ENCODE measurements at regions of chr17 and their contacts with region 1.

Region 1: GRCh38 chr17:81207610-81208581 is 14.9 kb downstream of the CEP131 start:
- DNase-seq: no peak
- H3K4me3 ChIP-seq: no peak overlapping the region
- H3K27ac ChIP-seq: no peak overlapping the region
- H3K4me1 ChIP-seq: no peaks in the 10 kb centered on the region
- H3K27me3 ChIP-seq: no peaks in the 10 kb centered on the region
- CTCF ChIP-seq: no peak

Region 2: GRCh38 chr17:81049973-81050551 is 157.8 kb before region 1 on chr17:
- CTCF ChIA-PET with region 1: no interaction called
- dilution Hi-C with region 1: no loop called
- in situ Hi-C with region 1: no loop called
- intact Hi-C with region 1: no loop called
- DNase-seq: peak; percentile 97
- H3K4me3 ChIP-seq: peak overlapping the region in 2 of 3 experiments; percentile 18 to 33
- H3K27ac ChIP-seq: peak overlapping the region; percentile 91
- H3K4me1 ChIP-seq: peaks cover 56% of the 10 kb centered on the region
- H3K27me3 ChIP-seq: no peaks in the 10 kb centered on the region
- CTCF ChIP-seq: no peak

Region 3: GRCh38 chr17:81114351-81115093 is 93.4 kb before region 1 on chr17:
- CTCF ChIA-PET with region 1: no interaction called
- dilution Hi-C with region 1: loop called (anchors 5 kb)
- in situ Hi-C with region 1: no loop called
- intact Hi-C with region 1: no loop called
- DNase-seq: no peak
- H3K4me3 ChIP-seq: no peak overlapping the region
- H3K27ac ChIP-seq: no peak overlapping the region
- H3K4me1 ChIP-seq: peaks cover 16% of the 10 kb centered on the region
- H3K27me3 ChIP-seq: no peaks in the 10 kb centered on the region
- CTCF ChIP-seq: no peak

Region 4: GRCh38 chr17:81131486-81132196 is 76.3 kb before region 1 on chr17:
- CTCF ChIA-PET with region 1: no interaction called
- dilution Hi-C with region 1: no loop called
- in situ Hi-C with region 1: no loop called
- intact Hi-C with region 1: no loop called
- DNase-seq: no peak
- H3K4me3 ChIP-seq: no peak overlapping the region
- H3K27ac ChIP-seq: no peak overlapping the region
- H3K4me1 ChIP-seq: no peaks in the 10 kb centered on the region
- H3K27me3 ChIP-seq: peaks cover 3% of the 10 kb centered on the region
- CTCF ChIP-seq: no peak

Region 5: DNA sequence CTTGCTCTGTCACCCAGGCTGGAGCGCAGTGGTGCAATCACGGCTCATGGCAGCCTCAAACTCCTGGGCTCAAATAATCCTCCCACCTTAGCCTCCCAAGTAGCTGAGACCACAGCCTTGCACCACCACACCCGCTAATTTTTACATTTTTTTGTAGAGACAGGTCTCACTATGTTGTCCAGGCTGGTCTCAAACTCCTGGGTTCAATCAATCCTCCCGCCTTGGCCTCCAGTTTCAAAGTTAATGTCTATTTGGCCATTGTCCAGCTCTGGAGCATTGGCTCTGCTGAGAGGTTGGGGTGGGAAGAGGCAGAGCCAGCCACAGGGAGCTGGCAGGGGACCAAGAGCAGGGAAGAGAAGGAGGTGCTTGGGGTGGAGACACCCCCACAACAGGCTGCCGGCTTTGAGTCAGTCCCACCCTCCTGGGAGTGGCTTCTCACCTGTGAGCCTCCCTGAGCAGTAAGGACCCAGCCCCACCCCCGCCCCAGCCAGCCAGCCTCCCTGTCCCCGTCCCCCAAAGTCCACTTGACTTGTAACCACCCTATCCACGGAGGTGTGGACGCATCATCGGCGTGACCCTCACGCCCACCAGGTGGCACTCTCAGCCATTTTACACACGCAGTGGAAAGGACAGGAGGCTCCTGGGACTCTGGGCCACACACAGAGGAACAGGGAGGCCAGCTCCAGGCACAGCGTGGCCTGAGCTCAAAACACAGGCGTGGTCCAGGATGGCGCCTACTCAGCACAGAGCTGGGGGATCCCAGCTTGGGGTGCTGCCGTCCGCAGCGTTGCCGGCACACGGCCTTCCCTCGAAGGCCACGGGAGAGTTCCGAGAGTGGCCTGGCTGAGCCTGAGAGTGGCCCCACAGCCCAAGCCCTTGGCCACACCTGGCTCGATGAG is 65.3 kb before region 1 on chr17:
- CTCF ChIA-PET with region 1: no interaction called
- dilution Hi-C with region 1: loop called (anchors 5 kb)
- in situ Hi-C with region 1: no loop called
- intact Hi-C with region 1: no loop called
- DNase-seq: peak; percentile 60
- H3K4me3 ChIP-seq: no peak overlapping the region
- H3K27ac ChIP-seq: no peak overlapping the region
- H3K4me1 ChIP-seq: peaks cover 5% of the 10 kb centered on the region
- H3K27me3 ChIP-seq: no peaks in the 10 kb centered on the region
- CTCF ChIP-seq: peak; percentile 59 to 74

Region 6: GRCh38 chr17:81171941-81172340 is 36.0 kb before region 1 on chr17:
- CTCF ChIA-PET with region 1: no interaction called
- dilution Hi-C with region 1: loop called (anchors 5 kb)
- in situ Hi-C with region 1: no loop called
- intact Hi-C with region 1: no loop called
- DNase-seq: no peak
- H3K4me3 ChIP-seq: no peak overlapping the region
- H3K27ac ChIP-seq: no peak overlapping the region
- H3K4me1 ChIP-seq: no peaks in the 10 kb centered on the region
- H3K27me3 ChIP-seq: no peaks in the 10 kb centered on the region
- CTCF ChIP-seq: no peak

Region 7: GRCh38 chr17:81222906-81223761 is 15.2 kb after region 1 on chr17 and contains the start of gene CEP131:
- CTCF ChIA-PET with region 1: no interaction called
- dilution Hi-C with region 1: no loop called
- in situ Hi-C with region 1: no loop called
- intact Hi-C with region 1: loop called (anchors 1 kb)
- DNase-seq: peak; percentile 98
- H3K4me3 ChIP-seq: peak within 1 kb of the TSS; percentile 79 to 84 (median 83)
- H3K27ac ChIP-seq: peak within 1 kb of the TSS; percentile 31
- H3K4me1 ChIP-seq: peaks cover 26% of the 10 kb centered on the region
- H3K27me3 ChIP-seq: no peaks in the 10 kb centered on the region
- CTCF ChIP-seq: no peak
- total RNA-seq, gene CEP131: 8.7 to 13.1 TPM

Region 8: GRCh38 chr17:81255019-81255717 is 47.3 kb after region 1 on chr17:
- CTCF ChIA-PET with region 1: no interaction called
- dilution Hi-C with region 1: no loop called
- in situ Hi-C with region 1: no loop called
- intact Hi-C with region 1: no loop called
- DNase-seq: no peak
- H3K4me3 ChIP-seq: no peak overlapping the region
- H3K27ac ChIP-seq: no peak overlapping the region
- H3K4me1 ChIP-seq: no peaks in the 10 kb centered on the region
- H3K27me3 ChIP-seq: no peaks in the 10 kb centered on the region
- CTCF ChIP-seq: peak; percentile 16 to 25